HEK293T (cell line): ENCODE measurements at regions of chr14 and their contacts with region 1.

Region 1: DNA sequence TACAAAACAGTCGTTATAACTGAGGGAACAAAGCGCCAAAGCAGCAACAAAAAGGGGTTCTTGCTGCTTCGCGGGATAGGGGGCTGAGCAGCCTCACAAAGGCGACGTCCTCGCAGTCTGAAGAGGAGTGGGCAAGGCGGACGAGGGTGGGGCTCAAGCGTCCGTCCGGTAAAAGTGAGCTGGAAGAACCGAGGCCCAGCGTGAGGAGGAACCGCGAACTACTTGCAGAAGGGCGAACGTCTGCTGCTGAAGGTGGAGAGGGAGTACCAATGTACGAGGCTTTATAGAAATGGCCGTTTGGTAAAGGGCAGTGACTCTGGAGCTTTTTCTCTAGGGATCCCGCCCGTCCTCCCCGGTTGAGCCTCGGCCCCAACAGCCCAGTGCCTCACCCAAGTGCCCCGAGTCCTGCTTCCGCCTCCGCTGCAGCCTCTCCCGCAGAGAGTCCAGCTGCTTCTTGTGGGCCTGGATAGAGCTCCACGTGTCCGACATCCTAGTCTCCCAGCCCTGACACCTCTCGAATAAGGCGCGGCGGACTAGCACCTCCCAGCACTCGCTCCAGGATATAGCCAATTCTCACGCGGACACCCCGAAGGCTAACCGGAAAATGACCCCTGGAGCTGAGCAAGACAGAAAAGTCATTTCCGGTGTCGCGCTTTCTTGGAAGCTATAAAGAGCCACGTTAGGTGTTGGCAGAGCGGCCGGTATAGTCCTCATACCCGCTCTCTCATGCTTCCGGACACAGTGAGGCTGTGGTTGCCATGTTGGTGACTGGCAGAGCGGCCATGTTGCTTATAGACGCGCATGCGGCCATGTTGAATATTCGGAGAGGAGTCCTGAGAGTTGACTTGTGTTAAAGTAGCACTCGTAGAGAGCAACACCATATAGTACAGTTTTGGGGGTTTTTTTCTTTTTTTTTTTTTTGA is at the start of gene METTL3:
- DNase-seq: peak; percentile 91

Region 2: GRCh38 chr14:21074398-21075272 is 436.4 kb before region 1 on chr14:
- CTCF ChIA-PET with region 1: no interaction called
- POLR2A ChIA-PET with region 1: no interaction called
- DNase-seq: no peak

Region 3: DNA sequence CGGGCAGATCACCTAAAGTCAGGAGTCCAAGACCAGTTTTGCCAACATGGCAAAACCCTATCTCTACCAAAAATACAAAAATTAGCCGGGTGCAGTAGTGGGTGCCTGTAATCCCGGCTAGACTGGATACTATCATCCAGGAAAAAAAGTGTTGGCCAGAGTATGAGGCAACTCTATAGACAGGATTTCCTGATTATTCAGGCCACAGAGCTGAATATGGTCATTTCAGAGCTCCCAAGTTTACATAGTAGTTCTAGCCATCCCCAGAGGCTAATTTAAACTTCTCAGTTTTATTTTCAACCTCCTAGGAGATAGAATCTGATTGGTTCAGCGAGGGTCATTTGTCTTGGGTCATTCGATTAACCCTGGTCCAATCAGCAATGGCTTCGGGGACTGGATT is 223.8 kb before region 1 on chr14:
- CTCF ChIA-PET with region 1: no interaction called
- POLR2A ChIA-PET with region 1: no interaction called
- DNase-seq: no peak

Region 4: DNA sequence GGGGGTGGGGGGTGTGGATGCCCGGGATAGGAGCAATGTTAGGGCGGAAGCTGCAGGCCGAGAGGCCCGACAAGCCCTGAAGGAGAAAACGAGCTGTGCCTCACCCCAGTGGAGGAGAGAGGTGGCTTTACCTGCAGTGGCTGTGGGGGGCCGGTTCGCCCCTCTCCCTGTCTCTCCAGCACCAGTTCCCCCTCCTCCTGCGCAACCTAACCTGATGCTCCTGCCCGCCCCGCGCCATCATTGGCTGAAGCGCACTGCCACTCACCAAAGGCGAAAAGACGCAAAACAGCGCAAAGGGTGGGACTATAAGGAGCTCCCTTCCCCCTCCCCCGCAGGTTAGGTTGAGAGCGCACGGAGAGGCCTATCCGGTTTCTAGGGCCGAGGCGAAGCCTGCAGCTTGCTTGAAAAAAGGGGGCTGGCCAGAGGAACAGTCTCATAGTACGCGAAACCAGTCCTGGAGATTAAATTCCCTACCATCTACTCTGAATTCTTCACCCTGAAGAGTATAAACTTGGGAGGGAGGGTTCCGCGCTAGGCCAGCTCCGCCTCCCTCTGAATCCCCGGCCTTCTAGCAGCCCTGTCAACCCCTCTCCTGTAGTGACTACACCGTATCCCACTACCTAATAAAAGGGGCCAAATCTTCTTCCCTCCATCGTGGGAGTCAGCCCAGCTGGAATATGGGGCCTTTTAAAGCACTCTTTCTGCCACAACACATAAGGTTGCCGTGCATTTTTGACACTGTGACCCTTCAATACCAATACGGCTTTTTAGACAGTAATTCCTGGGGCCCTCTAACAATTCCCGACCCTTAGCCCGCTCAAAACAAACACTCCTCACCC is 73.7 kb before region 1 on chr14:
- CTCF ChIA-PET with region 1: no interaction called
- POLR2A ChIA-PET with region 1: interaction called, 10 read pairs
- DNase-seq: peak; percentile 94

Region 5: DNA sequence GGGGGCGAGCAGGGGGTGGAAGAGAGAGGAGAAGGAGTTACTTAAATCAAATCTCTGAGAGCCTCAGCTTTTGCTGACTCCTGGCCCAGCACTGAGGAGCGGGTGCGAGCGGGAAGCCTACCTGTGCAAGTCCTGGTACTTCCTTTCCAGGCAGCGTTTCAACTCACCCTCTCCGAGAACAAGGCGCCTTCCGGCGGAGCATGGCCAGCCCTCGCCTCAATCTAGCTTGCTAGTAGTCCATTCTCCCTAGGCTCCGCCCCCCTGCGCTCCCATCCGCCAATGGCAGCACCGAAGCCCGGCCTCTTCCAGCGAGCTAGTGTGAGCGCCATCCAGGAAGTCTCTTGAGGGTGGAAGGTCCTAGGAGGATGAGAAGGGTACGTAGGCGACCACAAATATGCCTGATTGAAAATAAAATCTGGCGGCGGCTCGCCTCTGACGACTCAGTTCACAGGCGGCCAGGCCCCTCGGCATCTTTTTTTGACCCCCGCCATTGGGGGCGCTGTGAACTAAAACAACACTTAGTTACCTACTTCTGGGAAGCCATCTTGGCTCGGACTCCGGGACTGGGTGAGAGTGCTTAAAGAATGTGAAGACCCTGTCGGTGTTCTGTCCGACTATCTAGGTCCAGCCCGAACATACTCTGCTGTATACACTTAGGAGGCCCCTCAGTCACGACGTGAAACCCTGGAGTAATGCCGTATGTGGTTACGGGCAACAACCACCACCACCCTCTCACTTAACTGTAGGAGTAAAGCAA is 54.9 kb before region 1 on chr14 and contains the start of gene CHD8:
- CTCF ChIA-PET with region 1: no interaction called
- POLR2A ChIA-PET with region 1: interaction called, 13 read pairs
- DNase-seq: peak; percentile 96

Region 6: DNA sequence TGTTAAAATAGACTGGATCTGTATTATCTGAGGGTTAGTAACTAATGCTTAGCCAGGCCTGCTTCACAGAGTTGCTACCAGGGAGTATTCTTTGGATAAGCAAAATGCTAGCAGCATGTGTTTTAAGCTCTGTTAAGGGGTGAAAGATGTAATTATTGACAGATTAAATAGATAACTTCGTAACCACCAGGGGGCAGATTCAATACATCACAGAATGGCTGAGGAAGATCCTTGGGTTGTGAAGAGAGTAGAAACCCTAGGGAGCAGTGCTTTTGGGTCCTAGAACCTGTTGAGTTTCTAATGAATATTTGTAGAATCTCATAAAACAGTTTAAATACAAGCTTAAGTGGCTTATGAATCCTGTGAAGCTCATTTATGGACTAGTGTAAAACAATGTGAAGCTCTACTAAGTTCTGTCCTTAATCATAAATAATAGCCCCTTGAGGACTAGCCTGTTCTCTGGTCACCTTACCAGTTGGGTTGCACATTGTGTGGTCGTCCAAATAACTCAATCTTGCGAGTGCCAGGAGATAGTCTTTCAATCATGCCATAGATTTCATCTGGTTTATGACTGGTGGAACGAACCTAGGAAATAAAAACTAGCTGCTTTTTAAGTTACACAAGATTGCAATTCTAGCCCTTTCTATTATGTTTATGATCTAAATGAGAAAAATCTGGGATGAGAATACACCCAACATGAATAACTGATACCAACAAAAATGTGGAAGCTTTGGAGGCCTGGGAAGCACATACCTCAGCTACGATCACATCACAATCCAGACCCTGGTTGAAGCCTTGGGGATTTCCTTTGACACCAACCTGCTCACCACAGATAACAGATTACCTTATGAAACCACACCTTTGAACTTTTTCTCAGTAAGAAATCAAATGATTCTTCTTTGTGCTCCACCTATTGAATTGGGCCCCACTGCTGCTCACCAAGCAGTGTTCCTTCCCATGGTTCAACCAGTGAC is 12.2 kb before region 1 on chr14:
- CTCF ChIA-PET with region 1: interaction called, 12 read pairs
- POLR2A ChIA-PET with region 1: interaction called, 24 read pairs
- DNase-seq: peak; percentile 36

Region 7: GRCh38 chr14:21525962-21526671 is 15.1 kb after region 1 on chr14 and contains the start of gene SALL2:
- CTCF ChIA-PET with region 1: interaction called, 5 read pairs
- POLR2A ChIA-PET with region 1: interaction called, 257 read pairs
- DNase-seq: peak; percentile 78

Region 8: GRCh38 chr14:21536418-21537089 is 25.6 kb after region 1 on chr14:
- CTCF ChIA-PET with region 1: no interaction called
- POLR2A ChIA-PET with region 1: interaction called, 10 read pairs
- DNase-seq: no peak

Region 9: GRCh38 chr14:22059201-22059600 is 548.2 kb after region 1 on chr14:
- CTCF ChIA-PET with region 1: no interaction called
- POLR2A ChIA-PET with region 1: no interaction called
- DNase-seq: no peak